SK-N-SH (cell line): ENCODE measurements at regions of chr19 and their contacts with region 1.

Region 1: DNA sequence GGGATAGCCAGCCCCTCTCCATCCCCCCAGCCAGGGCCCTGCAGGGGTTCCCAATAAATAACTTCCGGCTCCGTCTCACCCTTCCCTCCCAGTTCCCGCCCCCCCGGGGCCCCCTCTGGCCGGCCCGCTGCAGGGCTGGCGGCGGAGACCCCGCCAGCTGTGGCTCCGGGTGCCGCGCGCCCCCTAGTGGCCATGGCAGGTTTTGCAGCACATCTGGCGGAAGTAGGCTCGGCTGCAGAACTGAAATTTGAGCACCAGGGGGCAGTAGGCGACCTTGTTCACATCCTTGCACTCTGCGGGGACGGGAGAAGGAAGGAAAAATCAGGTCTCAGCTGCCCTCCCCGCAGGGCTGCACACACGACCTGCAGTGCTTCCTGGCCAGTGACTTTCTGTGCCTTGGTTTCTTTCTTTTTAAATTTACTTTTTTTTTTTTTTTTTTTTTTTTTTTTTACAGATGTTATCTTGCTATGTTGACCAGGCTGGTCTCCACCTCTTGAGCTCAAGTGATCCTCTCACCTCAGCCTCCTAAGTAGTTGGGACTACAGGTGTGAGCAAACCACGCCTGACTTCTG is 3.6 kb upstream of the MYO1F start:
- DNase-seq: peak; percentile 90
- H3K4me3 ChIP-seq: peak overlapping the region in 1 of 2 experiments; percentile 50; a peak in 1 of 4 replicates
- H3K27ac ChIP-seq: no peak overlapping the region
- H3K4me1 ChIP-seq: no peaks in the 10 kb centered on the region; a peak in 1 of 4 replicates
- H3K27me3 ChIP-seq: no peaks in the 10 kb centered on the region
- CTCF ChIP-seq: peak; percentile 99
- EP300 ChIP-seq: no peak
- RAD21 ChIP-seq: peak; percentile 78

Region 2: DNA sequence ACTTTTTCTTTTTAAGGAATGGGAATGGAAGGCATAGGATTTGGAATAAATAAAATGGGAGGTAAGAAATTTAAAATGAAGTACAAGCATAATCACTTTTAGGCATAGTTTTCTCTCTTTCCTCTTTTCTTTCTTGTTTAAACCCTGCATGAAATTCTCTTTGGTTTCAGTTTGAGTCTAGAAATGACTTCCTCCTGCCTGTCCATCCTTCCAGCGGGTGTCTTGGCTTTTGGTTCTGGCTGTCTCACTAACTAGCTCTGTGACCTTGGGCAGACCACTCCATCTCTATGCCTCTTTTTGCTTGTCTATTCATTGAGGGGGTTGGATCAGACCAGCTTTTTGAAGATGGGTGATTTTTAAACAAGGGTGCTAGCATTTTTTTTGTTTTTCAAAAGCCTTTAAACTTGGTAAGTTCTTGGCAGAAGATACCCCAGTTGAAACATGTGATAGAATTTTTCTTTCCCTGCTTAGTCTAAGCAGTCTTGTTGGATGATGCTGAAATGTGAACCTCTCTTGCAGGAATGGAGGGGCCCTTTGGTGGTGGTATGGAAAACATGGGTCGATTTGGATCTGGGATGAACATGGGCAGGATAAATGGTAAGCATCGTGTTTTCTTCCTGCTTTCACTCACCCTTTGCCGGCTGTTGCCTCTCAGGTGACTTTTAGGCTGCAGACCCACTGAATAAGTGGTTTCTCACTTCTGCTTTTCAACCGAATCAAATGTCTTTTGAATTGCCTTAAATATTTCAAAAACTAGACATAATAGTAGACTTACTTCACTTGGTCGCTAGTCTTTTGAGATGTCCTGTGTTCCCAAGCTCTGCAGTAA is 106.9 kb before region 1 on chr19:
- CTCF ChIA-PET with region 1: no interaction called
- POLR2A ChIA-PET with region 1: no interaction called
- DNase-seq: no peak
- H3K4me3 ChIP-seq: no peak overlapping the region
- H3K27ac ChIP-seq: no peak overlapping the region
- H3K4me1 ChIP-seq: peaks cover 0 to 14% of the 10 kb centered on the region in 2 experiments; a peak in 2 of 4 replicates
- H3K27me3 ChIP-seq: no peaks in the 10 kb centered on the region
- CTCF ChIP-seq: no peak
- EP300 ChIP-seq: no peak
- RAD21 ChIP-seq: no peak

Region 3: DNA sequence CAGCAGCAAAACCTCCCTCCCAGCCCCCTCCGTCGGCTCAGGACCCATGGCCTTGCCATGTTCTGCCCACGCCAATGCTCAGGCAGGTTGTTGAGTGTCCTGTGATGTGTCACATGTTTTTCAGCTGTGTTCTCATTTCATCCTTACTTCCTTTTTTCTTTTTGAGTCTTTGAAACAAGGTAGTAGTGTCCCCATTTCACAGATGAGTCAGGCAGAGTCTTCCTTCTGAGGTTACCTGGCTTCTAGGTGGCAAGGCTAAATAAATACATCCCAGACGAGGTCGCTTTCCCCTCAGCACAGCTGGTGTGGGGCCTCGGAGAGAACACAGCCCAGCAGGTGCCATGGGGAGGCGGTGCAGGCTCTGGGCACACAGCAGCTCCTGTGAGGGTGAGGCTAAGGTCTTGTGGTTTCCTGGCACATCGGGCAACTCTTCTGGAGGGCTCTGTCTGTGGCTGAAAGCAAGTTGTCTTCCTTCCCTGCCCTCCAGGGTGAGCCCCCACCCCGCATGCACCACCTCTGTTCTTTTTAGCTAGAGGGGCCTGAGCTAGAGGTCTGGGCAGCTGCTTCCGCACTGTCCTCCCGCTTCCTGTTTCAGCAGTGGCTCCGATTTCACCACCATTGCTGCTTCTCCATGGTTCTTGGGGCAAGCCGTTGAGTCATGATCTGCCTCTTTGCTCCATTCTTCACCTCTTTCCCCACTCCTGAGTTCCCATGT is 93.5 kb before region 1 on chr19:
- CTCF ChIA-PET with region 1: no interaction called
- POLR2A ChIA-PET with region 1: no interaction called
- DNase-seq: no peak
- H3K4me3 ChIP-seq: no peak overlapping the region
- H3K27ac ChIP-seq: no peak overlapping the region
- H3K4me1 ChIP-seq: no peaks in the 10 kb centered on the region
- H3K27me3 ChIP-seq: no peaks in the 10 kb centered on the region
- CTCF ChIP-seq: no peak
- EP300 ChIP-seq: no peak
- RAD21 ChIP-seq: no peak

Region 4: GRCh38 chr19:8526345-8527067 is 54.3 kb before region 1 on chr19:
- CTCF ChIA-PET with region 1: interaction called, 27 read pairs
- POLR2A ChIA-PET with region 1: interaction called, 3 read pairs
- DNase-seq: peak; percentile 95
- H3K4me3 ChIP-seq: peak overlapping the region; percentile 63 to 77
- H3K27ac ChIP-seq: peak overlapping the region; percentile 73 to 97
- H3K4me1 ChIP-seq: peaks cover 0 to 7% of the 10 kb centered on the region in 2 experiments; a peak in 1 of 4 replicates
- H3K27me3 ChIP-seq: no peaks in the 10 kb centered on the region
- CTCF ChIP-seq: no peak
- EP300 ChIP-seq: no peak
- RAD21 ChIP-seq: no peak

Region 5: GRCh38 chr19:8569066-8569771 is 11.6 kb before region 1 on chr19:
- CTCF ChIA-PET with region 1: interaction called, 120 read pairs
- POLR2A ChIA-PET with region 1: interaction called, 4 read pairs
- DNase-seq: no peak
- H3K4me3 ChIP-seq: no peak overlapping the region
- H3K27ac ChIP-seq: no peak overlapping the region
- H3K4me1 ChIP-seq: peaks cover 0 to 4% of the 10 kb centered on the region in 2 experiments; a peak in 1 of 4 replicates
- H3K27me3 ChIP-seq: no peaks in the 10 kb centered on the region
- CTCF ChIP-seq: 0 out of 2 replicates have a peak, but pooled peaks have one; percentile 6
- EP300 ChIP-seq: no peak
- RAD21 ChIP-seq: no peak

Region 6: GRCh38 chr19:8601786-8602185 is 21.0 kb after region 1 on chr19:
- CTCF ChIA-PET with region 1: interaction called, 152 read pairs
- POLR2A ChIA-PET with region 1: no interaction called
- DNase-seq: no peak
- H3K4me3 ChIP-seq: no peak overlapping the region
- H3K27ac ChIP-seq: no peak overlapping the region
- H3K4me1 ChIP-seq: no peaks in the 10 kb centered on the region
- H3K27me3 ChIP-seq: no peaks in the 10 kb centered on the region
- CTCF ChIP-seq: no peak
- EP300 ChIP-seq: no peak
- RAD21 ChIP-seq: no peak

Region 7: GRCh38 chr19:8641908-8642547 is 61.2 kb after region 1 on chr19:
- CTCF ChIA-PET with region 1: interaction called, 49 read pairs
- POLR2A ChIA-PET with region 1: no interaction called
- DNase-seq: peak; percentile 44
- H3K4me3 ChIP-seq: no peak overlapping the region
- H3K27ac ChIP-seq: no peak overlapping the region
- H3K4me1 ChIP-seq: peaks cover 0 to 7% of the 10 kb centered on the region in 2 experiments; a peak in 1 of 4 replicates
- H3K27me3 ChIP-seq: peaks cover 29% of the 10 kb centered on the region; the same call in 1 of the 2 replicates
- CTCF ChIP-seq: peak; percentile 64
- EP300 ChIP-seq: no peak
- RAD21 ChIP-seq: peak; percentile 54